ENCODE measurements at regions of chr2 and their contacts with region 1.

Region 1: DNA sequence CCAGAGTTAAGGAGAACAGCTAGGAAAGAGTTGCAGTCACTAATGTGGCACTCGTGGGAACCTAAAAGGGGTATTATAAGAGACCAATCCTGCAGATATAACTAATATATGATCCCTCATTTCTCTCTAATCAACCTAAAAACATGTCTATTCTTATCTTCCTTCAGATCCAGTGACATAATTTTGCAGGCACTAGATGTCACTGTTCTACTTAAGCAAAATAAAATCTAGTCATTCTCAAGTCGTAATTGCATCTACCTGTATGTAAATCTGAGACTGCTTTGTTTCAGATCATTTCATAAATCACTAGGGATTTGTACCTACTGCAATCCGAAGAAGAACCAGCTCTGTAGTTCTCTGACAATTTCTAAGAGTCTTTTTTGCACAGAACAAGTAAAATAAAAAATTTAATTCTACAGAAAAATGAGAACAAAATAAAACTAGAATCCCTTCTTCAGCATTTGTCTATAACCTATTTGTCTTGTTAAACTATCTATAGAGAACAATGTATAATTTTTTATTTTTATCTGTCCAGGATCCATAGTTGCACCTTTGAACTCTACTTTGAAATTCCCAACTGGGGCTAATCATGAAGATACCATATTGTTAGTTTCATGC is 56.5 kb upstream of the ERBB4 start:
- DNase-seq: peak; percentile 32
- ATAC-seq: peak; percentile 78
- H3K4me3 ChIP-seq: no peak overlapping the region
- H3K27ac ChIP-seq: no peak overlapping the region
- H3K4me1 ChIP-seq: no peaks in the 10 kb centered on the region
- H3K27me3 ChIP-seq: no peaks in the 10 kb centered on the region
- CTCF ChIP-seq: peak; percentile 27 to 58 (median 36); a peak in 4 of 6 replicates
- POLR2A ChIP-seq: no peak
- RAD21 ChIP-seq: peak; percentile 64

Region 2: DNA sequence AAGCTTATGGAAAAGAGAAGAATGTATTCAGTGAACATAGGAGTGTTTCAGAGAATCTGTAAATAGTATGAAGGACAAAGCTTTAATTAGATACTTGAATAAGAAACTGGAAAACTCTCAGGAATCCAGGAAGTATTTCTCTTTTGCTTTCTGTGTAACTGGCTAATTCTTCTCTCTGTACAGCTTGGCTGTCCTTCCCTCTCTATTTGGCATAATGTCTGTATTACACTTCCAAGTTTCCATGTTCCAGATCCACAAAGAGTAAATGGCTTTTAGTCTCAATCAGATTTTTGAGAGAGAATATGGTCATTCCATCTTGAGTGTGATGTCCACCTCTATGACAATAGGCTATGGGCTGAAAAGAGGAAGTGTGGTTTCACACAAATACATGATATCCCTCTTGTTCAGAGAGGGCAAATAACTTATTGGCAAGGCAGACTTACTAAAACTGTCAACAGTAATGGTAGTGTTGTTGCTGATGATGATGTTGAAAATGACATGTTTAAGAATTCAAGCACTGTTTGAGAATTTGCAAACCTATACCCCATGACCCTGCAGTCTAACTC is 72.7 kb after region 1 on chr2:
- CTCF ChIA-PET with region 1: no interaction called
- POLR2A ChIA-PET with region 1: no interaction called
- RAD21 ChIA-PET with region 1: no interaction called
- intact Hi-C with region 1: no loop called
- DNase-seq: no peak
- ATAC-seq: no peak
- H3K4me3 ChIP-seq: no peak overlapping the region
- H3K27ac ChIP-seq: no peak overlapping the region
- H3K4me1 ChIP-seq: no peaks in the 10 kb centered on the region
- H3K27me3 ChIP-seq: no peaks in the 10 kb centered on the region
- CTCF ChIP-seq: no peak
- POLR2A ChIP-seq: no peak
- RAD21 ChIP-seq: no peak

Region 3: DNA sequence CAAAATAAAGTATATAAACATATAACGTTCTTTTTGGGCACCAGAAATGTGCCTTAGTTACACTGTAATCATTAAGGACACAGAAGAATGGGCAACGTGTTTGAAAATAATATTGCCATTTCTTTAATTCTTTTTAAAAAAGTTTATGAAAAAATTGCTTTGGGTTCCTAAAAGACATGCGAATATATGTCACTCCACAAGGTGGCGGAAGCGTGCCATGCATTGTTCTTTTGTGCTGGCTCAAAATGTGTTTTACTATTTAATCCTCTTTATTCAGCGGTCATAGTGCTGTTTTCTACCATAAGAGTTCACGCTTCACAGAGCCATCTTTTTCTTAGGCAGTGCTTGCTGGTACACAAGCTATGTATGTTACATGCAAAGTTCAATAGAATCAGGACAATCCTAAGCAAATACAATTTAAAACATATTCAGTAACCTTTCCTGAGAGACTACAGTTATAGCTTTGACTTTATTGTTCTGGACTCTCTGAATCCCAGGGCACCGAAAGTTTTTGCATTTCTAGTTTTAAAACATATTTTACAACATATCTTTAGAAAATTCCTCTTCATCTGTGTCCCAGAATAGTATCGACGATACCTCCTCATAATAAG is 91.2 kb after region 1 on chr2:
- CTCF ChIA-PET with region 1: no interaction called
- POLR2A ChIA-PET with region 1: no interaction called
- RAD21 ChIA-PET with region 1: no interaction called
- intact Hi-C with region 1: loop called (anchors 1 kb)
- DNase-seq: peak; percentile 44
- ATAC-seq: peak; percentile 61
- H3K4me3 ChIP-seq: no peak overlapping the region
- H3K27ac ChIP-seq: no peak overlapping the region
- H3K4me1 ChIP-seq: no peaks in the 10 kb centered on the region
- H3K27me3 ChIP-seq: no peaks in the 10 kb centered on the region
- CTCF ChIP-seq: peak; percentile 72 to 84 (median 79)
- POLR2A ChIP-seq: no peak
- RAD21 ChIP-seq: peak; percentile 90